Naive thymus-derived CD8-positive, alpha-beta T cell (primary cell): ENCODE measurements at regions of chr16 and their contacts with region 1.

Region 1: GRCh38 chr16:29926005-29926710 is at the start of gene KCTD13:
- DNase-seq: peak; percentile 79 to 97 (median 91)
- ATAC-seq: peak; percentile 88 to 93
- H3K4me3 Mint-ChIP-seq: peak within 1 kb of the TSS; percentile 90 to 97 (median 94)
- H3K27ac Mint-ChIP-seq: peak within 1 kb of the TSS; percentile 90 to 98 (median 97)
- H3K4me1 Mint-ChIP-seq: peaks cover 13 to 44% (median 38%) of the 10 kb centered on the region in 4 donors
- H3K27me3 Mint-ChIP-seq: no peaks in the 10 kb centered on the region
- polyA plus RNA-seq, gene KCTD13: 5.4 to 10.0 (median 8.4) TPM

Region 2: GRCh38 chr16:29720699-29721098 is 205.5 kb before region 1 on chr16:
- POLR2A ChIA-PET with region 1: no interaction called
- DNase-seq: no peak
- ATAC-seq: no peak
- H3K4me3 Mint-ChIP-seq: no peak overlapping the region
- H3K27ac Mint-ChIP-seq: peak overlapping the region in 4 of 10 donors; percentile 15 to 81 (median 70)
- H3K4me1 Mint-ChIP-seq: peaks cover 9 to 23% (median 20%) of the 10 kb centered on the region in 4 donors
- H3K27me3 Mint-ChIP-seq: no peaks in the 10 kb centered on the region

Region 3: DNA sequence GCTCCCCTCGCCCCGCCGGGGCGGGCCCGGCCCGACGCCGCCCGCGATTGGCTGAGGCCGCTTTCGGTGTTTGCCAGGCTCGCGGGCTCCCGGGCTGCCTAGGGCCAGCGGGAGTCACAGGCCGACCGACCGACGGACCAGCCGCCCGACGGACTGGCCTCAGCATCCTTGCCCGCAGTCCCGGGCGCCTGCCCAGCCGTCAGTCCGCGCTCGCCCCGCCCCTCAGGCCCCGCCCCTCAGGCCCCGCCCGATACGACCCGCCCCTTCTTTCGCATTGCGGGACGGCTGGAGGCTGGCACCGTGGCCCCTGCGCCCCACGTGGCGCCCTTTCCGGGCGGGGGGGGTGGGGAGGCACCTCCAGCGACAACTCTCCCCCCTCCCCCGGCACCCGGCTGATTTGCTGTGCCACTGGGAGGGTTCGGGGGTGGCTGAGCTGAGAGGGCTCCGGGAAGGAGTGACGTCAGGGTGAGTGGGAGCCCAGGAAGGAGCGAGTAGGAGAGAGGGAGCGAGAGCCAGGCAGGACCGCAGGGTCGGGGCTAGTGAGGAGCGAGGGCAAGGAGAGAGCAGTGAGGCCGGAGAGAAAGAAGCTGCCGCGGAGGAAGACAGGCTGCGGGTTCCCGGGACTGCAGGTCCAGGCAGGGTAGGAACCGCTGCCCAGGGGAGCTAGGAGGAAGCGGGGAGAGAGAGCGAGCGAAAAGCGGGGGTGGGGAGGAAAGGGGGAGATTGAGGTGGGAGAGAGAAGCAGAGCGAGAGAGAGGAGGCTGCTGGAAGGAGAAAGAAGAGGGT is 25.9 kb before region 1 on chr16 and contains the start of gene ASPHD1:
- POLR2A ChIA-PET with region 1: interaction called, 17 read pairs
- DNase-seq: peak in 9 of 10 donors; percentile 27 to 90 (median 79)
- ATAC-seq: peak; percentile 90 to 91
- H3K4me3 Mint-ChIP-seq: peak within 1 kb of the TSS; percentile 63 to 86 (median 74)
- H3K27ac Mint-ChIP-seq: no peak within 1 kb of the TSS
- H3K4me1 Mint-ChIP-seq: peaks cover 8 to 30% (median 11%) of the 10 kb centered on the region in 4 donors
- H3K27me3 Mint-ChIP-seq: peaks cover 18 to 34% (median 20%) of the 10 kb centered on the region in 5 donors
- polyA plus RNA-seq, gene ASPHD1: not detected

Region 4: GRCh38 chr16:29961479-29962343 is 35.6 kb after region 1 on chr16 and contains the start of gene TMEM219:
- POLR2A ChIA-PET with region 1: interaction called, 32 read pairs
- DNase-seq: peak; percentile 90 to 98 (median 96)
- ATAC-seq: peak; percentile 84 to 91
- H3K4me3 Mint-ChIP-seq: peak within 1 kb of the TSS; percentile 86 to 94 (median 89)
- H3K27ac Mint-ChIP-seq: peak within 1 kb of the TSS; percentile 77 to 97 (median 93)
- H3K4me1 Mint-ChIP-seq: peaks cover 12 to 29% (median 27%) of the 10 kb centered on the region in 4 donors
- H3K27me3 Mint-ChIP-seq: no peaks in the 10 kb centered on the region
- polyA plus RNA-seq, gene TMEM219: 157 to 179 (median 174) TPM

Region 5: GRCh38 chr16:29973384-29974246 is 47.5 kb after region 1 on chr16 and contains the start of gene TAOK2:
- POLR2A ChIA-PET with region 1: interaction called, 29 read pairs
- DNase-seq: peak; percentile 82 to 97 (median 92)
- ATAC-seq: peak; percentile 88 to 96
- H3K4me3 Mint-ChIP-seq: peak within 1 kb of the TSS; percentile 82 to 98 (median 95)
- H3K27ac Mint-ChIP-seq: peak within 1 kb of the TSS; percentile 66 to 96 (median 91)
- H3K4me1 Mint-ChIP-seq: peaks cover 19 to 43% (median 40%) of the 10 kb centered on the region in 4 donors
- H3K27me3 Mint-ChIP-seq: no peaks in the 10 kb centered on the region
- polyA plus RNA-seq, gene TAOK2: 2.6 to 6.6 (median 2.8) TPM